ENCODE measurements at regions of chr15 and their contacts with region 1.

Region 1: GRCh38 chr15:82971218-82971984 is 14.6 kb upstream of the RAMAC start:
- DNase-seq: no peak
- H3K4me3 ChIP-seq: no peak overlapping the region
- H3K27ac ChIP-seq: no peak overlapping the region
- H3K4me1 ChIP-seq: no peaks in the 10 kb centered on the region
- H3K27me3 ChIP-seq: no peaks in the 10 kb centered on the region
- CTCF ChIP-seq: no peak
- EP300 ChIP-seq: no peak
- POLR2A ChIP-seq: no peak

Region 2: DNA sequence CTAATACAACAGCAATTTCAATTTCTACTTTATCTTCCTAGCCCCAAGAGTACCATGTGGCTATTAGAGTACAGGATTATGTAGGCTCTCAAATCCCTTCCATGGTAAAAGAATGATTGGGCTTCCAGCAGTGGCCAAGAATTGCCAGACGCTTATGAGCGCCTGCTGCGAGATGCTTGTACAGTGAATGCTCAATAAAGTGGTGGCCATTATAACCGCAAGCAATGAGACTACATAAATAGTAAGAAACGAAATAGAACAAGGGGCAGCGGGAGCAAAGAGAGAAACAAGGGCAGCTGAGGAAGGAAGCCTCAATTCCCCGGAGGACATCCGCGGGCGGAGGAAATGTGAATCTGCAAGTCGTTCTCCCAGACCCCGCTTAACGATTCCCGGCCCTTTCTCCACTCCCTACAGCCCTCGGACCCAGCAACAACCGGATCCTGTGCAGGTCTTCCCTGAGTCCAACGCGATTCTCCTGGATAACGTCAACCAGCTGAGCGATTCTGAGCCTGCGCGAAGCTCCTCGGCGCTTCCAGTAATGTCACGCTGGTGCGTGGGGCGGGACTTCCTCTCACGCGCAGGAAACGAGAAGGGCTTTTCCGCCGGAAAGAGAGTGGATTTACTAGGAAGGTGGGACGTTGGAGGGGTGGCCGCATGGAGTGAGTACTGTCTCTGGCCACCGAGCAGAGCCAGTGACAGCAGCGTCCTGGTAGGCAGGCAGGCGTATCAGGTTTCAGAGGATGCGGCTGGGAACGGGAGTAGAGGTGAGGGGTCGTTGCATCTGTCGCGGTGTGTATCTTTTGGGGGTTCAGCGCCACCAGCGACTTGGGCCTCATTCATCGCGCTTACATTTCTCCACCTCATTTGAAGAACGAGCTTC is 221.2 kb before region 1 on chr15:
- intact Hi-C with region 1: loop called in 1 of 4 experiments (anchors 10 kb)
- DNase-seq: peak; percentile 86 to 92 (median 88)
- H3K4me3 ChIP-seq: peak overlapping the region; percentile 71
- H3K27ac ChIP-seq: peak overlapping the region; percentile 55 to 63
- H3K4me1 ChIP-seq: peaks cover 11% of the 10 kb centered on the region
- H3K27me3 ChIP-seq: no peaks in the 10 kb centered on the region
- CTCF ChIP-seq: no peak
- EP300 ChIP-seq: no peak
- POLR2A ChIP-seq: peak; percentile 72

Region 3: DNA sequence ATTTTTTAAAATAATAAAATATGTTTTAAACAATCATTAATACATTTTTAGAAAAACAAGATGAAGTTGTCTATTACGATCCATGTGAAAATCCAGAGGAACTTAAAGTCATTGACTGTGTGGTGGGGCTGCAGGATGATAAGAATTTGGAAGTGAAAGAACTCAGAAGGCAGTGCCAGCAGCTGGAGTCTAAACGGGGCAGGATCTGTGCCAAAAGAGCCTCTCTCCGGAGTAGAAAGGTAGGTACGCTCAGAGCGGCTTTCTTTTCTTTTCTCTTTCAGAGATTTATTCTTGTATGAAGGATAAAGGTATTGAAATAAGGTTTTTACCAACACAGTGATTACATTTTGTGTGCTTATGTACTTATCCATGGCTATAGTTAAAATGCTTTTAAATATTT is 148.4 kb before region 1 on chr15:
- intact Hi-C with region 1: no loop called
- DNase-seq: no peak
- H3K4me3 ChIP-seq: no peak overlapping the region
- H3K27ac ChIP-seq: no peak overlapping the region
- H3K4me1 ChIP-seq: no peaks in the 10 kb centered on the region
- H3K27me3 ChIP-seq: no peaks in the 10 kb centered on the region
- CTCF ChIP-seq: no peak
- EP300 ChIP-seq: no peak
- POLR2A ChIP-seq: no peak

Region 4: DNA sequence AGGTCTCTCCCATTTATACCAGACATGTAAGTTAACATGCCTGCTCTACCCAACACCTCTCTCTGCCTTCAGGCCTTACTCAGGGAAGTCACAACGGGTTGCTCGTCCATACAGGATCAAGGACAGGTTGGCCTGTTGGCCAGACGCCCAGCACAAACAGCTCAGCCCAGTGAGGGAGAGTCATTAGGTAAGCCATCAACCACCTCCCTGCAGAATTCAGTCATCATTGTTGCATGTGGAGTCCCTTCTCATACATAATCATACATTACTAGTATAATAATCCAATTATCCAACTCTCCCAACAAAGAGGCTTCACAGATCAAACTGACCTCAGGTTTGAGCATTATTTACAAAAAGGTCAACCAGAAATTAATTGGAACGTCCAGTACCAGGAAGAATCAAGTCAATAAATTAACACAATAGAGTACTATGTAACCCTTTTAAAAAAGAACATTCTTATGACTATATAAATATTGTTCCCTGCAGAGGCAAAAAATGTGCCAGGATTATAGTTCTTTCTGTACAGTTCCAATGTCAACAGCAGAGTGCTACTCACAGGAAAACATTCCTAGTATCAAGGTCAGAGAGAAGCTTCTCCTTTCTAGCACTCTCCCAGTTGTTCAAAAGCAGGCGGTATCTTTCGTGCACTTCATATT is 52.0 kb before region 1 on chr15:
- intact Hi-C with region 1: loop called in 1 of 4 experiments (anchors 10 kb)
- DNase-seq: peak; percentile 53 to 75 (median 66)
- H3K4me3 ChIP-seq: no peak overlapping the region
- H3K27ac ChIP-seq: peak overlapping the region in 1 of 2 donors; percentile 11
- H3K4me1 ChIP-seq: peaks cover 17% of the 10 kb centered on the region
- H3K27me3 ChIP-seq: no peaks in the 10 kb centered on the region
- CTCF ChIP-seq: no peak
- EP300 ChIP-seq: no peak
- POLR2A ChIP-seq: no peak

Region 5: GRCh38 chr15:83170474-83171165 is 199.2 kb after region 1 on chr15:
- intact Hi-C with region 1: no loop called
- DNase-seq: no peak
- H3K4me3 ChIP-seq: no peak overlapping the region
- H3K27ac ChIP-seq: no peak overlapping the region
- H3K4me1 ChIP-seq: no peaks in the 10 kb centered on the region
- H3K27me3 ChIP-seq: no peaks in the 10 kb centered on the region
- CTCF ChIP-seq: no peak
- EP300 ChIP-seq: no peak
- POLR2A ChIP-seq: no peak